ENCODE measurements at regions of chr3 and their contacts with region 1.

Region 1: DNA sequence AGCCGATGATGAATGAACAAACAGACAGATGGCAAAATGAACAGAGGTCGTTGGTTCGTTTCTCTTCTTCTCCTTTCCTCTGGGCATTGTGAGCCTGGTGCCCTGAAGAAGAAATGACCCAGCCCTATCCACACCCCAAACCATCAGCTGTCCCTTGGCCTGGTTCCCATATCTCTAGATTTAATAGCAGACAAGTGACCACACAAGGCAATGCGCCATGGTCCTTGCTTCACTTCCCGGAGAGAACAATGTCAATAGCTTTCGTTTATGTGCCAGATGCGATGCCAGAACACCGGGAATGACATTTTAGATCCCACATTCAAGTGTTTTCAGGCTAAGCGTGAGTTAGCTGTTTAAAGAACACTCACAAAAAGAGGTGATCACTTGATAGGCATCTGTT is 17.7 kb downstream of the POC1A start:
- DNase-seq: no peak
- H3K4me3 ChIP-seq: no peak overlapping the region
- H3K27ac ChIP-seq: peak overlapping the region in 2 of 4 donors; percentile 15 to 53
- H3K4me1 ChIP-seq: peaks cover 0 to 4% (median 0%) of the 10 kb centered on the region in 4 donors
- H3K27me3 ChIP-seq: no peaks in the 10 kb centered on the region
- CTCF ChIP-seq: no peak
- EP300 ChIP-seq: no peak
- POLR2A ChIP-seq: no peak

Region 2: DNA sequence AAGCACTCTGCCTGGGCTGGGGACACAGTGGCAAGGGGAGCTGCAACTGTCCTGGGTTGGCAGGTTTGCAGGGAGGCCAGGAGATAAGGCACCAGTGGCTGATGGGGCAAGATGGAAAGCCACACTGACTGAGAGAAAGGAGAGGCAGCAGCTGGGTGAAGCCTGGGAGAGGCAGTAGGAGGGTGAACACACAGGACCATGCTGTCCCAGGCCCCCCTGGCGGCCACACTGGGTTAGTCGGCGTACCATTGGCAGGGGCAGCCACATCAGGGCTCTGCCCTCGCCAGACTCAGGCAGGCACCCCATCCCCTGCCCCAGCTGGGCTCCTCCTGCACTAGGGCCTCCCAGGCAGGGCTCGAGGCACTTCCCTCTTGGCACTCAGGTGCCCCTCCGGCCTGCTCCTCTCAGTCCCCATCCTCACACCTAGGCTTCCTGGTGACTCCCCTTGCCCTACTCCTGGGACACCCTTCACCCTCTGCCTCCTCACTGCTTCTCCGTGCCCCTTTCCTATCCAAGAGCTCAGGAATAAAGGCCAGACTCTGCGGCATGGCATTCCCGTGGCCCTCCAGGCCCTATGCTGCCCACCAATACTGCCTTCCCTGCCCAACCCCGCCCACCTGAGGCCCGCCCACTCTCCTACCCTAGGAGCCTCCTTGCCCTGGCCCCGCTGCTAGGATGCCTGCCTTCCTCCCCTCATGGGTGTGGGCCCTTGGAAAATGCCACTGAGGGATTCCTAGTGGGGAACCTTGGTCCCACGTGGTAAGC is 51.4 kb before region 1 on chr3:
- intact Hi-C with region 1: loop called (anchors 5 kb)
- DNase-seq: no peak
- H3K4me3 ChIP-seq: no peak overlapping the region
- H3K27ac ChIP-seq: no peak overlapping the region
- H3K4me1 ChIP-seq: peaks cover 27 to 35% (median 31%) of the 10 kb centered on the region in 4 donors
- H3K27me3 ChIP-seq: no peaks in the 10 kb centered on the region
- CTCF ChIP-seq: no peak
- EP300 ChIP-seq: no peak
- POLR2A ChIP-seq: no peak

Region 3: GRCh38 chr3:52570076-52570475 is 433.6 kb after region 1 on chr3:
- intact Hi-C with region 1: no loop called
- DNase-seq: no peak
- H3K4me3 ChIP-seq: no peak overlapping the region
- H3K27ac ChIP-seq: peak overlapping the region in 3 of 4 donors; percentile 34 to 55 (median 37)
- H3K4me1 ChIP-seq: peaks cover 0 to 26% (median 18%) of the 10 kb centered on the region in 4 donors
- H3K27me3 ChIP-seq: no peaks in the 10 kb centered on the region
- CTCF ChIP-seq: no peak
- EP300 ChIP-seq: no peak
- POLR2A ChIP-seq: no peak